ENCODE measurements at regions of chr13 and their contacts with region 1.

Region 1: DNA sequence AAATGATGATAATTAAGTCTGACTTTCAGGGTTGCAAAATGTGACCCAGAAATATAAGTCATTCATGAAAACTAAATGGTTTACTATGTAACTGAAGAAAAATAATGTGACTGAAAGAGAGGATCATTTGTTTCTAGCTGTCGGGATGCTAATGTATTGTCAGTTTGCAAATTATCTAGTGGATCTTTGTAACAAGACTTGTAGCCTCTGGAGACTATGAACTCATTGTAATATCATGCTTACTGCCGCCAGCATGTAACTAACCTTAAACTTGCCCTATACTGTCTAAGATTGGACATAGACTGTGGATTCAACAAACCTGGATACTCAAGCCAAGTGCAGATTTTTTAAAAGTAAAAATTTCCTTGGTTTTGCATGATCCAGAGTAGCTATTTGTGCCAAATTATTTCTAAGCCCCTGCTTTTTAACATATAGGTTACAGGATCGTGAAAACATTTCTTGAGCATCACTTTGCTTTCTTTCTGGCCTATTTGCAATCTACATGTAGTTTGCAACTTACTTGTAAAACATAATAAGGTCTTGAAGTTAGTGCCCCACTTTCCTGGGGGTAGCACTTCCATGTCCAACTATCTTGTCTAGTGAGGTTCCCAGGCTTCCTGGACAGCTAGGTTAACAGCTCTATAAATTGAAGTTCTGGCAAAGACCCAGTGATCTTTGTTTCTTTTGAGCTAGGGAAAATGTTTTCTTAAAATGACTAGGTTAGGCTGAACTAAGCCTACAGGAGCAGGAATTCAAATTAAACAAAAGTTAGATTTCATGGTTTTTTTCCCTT is 3.3 kb upstream of the POSTN start:
- DNase-seq: no peak
- ATAC-seq: no peak
- H3K4me3 ChIP-seq: no peak overlapping the region
- H3K4me3 Mint-ChIP-seq: no peak overlapping the region
- H3K27ac ChIP-seq: no peak overlapping the region
- H3K27ac Mint-ChIP-seq: no peak overlapping the region
- H3K4me1 ChIP-seq: no peaks in the 10 kb centered on the region
- H3K4me1 Mint-ChIP-seq: no peaks in the 10 kb centered on the region
- H3K27me3 ChIP-seq: no peaks in the 10 kb centered on the region
- H3K27me3 Mint-ChIP-seq: no peaks in the 10 kb centered on the region
- CTCF ChIP-seq: no peak

Region 2: GRCh38 chr13:37534181-37534580 is 67.7 kb before region 1 on chr13:
- CTCF ChIA-PET with region 1: no interaction called
- POLR2A ChIA-PET with region 1: no interaction called
- intact Hi-C with region 1: no loop called
- DNase-seq: no peak
- ATAC-seq: no peak
- H3K4me3 ChIP-seq: no peak overlapping the region
- H3K4me3 Mint-ChIP-seq: no peak overlapping the region
- H3K27ac ChIP-seq: no peak overlapping the region
- H3K27ac Mint-ChIP-seq: no peak overlapping the region
- H3K4me1 ChIP-seq: no peaks in the 10 kb centered on the region
- H3K4me1 Mint-ChIP-seq: no peaks in the 10 kb centered on the region
- H3K27me3 ChIP-seq: no peaks in the 10 kb centered on the region
- H3K27me3 Mint-ChIP-seq: no peaks in the 10 kb centered on the region
- CTCF ChIP-seq: no peak

Region 3: GRCh38 chr13:37636701-37637100 is 34.9 kb after region 1 on chr13:
- CTCF ChIA-PET with region 1: no interaction called
- POLR2A ChIA-PET with region 1: no interaction called
- intact Hi-C with region 1: loop called in 1 of 2 experiments (anchors 1 kb)
- DNase-seq: no peak
- ATAC-seq: no peak
- H3K4me3 ChIP-seq: no peak overlapping the region
- H3K4me3 Mint-ChIP-seq: no peak overlapping the region
- H3K27ac ChIP-seq: no peak overlapping the region
- H3K27ac Mint-ChIP-seq: no peak overlapping the region
- H3K4me1 ChIP-seq: no peaks in the 10 kb centered on the region
- H3K4me1 Mint-ChIP-seq: no peaks in the 10 kb centered on the region
- H3K27me3 ChIP-seq: no peaks in the 10 kb centered on the region
- H3K27me3 Mint-ChIP-seq: no peaks in the 10 kb centered on the region
- CTCF ChIP-seq: no peak

Measured in CD8-positive, alpha-beta T cell (primary cell).